HEK293 (cell line): ENCODE measurements at regions of chr1 and their contacts with region 1.

Region 1: GRCh38 chr1:183234660-183235476 is 48.8 kb downstream of the LAMC2 start:
- H3K4me3 ChIP-seq: peak overlapping the region; percentile 16
- H3K27ac ChIP-seq: peak overlapping the region; percentile 68
- H3K4me1 ChIP-seq: peaks cover 6% of the 10 kb centered on the region
- CTCF ChIP-seq: peak; percentile 67

Region 2: DNA sequence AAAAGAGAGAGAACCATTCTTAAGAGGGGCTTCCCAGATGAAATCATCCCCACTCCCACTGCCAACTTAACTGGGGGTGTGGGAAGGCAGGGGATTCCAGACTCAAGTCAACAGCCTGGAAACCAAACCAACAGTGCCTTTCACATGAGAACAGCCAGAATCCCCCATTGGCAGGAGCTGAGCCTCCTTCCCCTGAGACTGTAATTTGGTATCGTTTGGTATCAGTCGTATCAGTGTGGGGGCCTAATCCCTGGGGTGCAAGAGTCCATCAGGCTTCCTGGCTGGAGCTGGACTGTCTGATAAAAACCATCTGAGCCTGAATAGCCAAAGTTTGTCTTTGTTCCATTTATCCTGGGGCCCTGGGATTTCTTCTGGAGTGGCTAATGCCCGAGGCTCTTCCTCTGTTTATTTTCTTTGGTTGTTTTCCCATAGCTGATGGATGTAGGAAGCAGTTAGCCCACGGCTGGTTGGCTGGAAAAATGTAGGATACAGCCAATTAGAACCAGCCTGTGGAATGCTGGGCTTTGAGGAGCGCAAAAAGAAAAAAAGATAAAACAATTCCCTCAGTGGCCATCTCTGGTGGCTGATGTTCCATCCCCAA is 35.8 kb after region 1 on chr1:
- CTCF ChIA-PET with region 1: interaction called, 11 read pairs
- POLR2A ChIA-PET with region 1: interaction called, 3 read pairs
- H3K4me3 ChIP-seq: no peak overlapping the region
- H3K27ac ChIP-seq: peak overlapping the region; percentile 51
- H3K4me1 ChIP-seq: peaks cover 8% of the 10 kb centered on the region
- CTCF ChIP-seq: no peak